ENCODE measurements at regions of chr1 and their contacts with region 1.

Region 1: GRCh38 chr1:173420330-173420806 is 56.8 kb upstream of the PRDX6 start:
- DNase-seq: no peak
- ATAC-seq: peak; percentile 21
- H3K4me3 Mint-ChIP-seq: peak overlapping the region; percentile 60
- H3K27ac Mint-ChIP-seq: peak overlapping the region; percentile 95
- H3K4me1 Mint-ChIP-seq: peaks cover 63% of the 10 kb centered on the region
- H3K27me3 Mint-ChIP-seq: no peaks in the 10 kb centered on the region
- CTCF ChIP-seq: no peak

Region 2: DNA sequence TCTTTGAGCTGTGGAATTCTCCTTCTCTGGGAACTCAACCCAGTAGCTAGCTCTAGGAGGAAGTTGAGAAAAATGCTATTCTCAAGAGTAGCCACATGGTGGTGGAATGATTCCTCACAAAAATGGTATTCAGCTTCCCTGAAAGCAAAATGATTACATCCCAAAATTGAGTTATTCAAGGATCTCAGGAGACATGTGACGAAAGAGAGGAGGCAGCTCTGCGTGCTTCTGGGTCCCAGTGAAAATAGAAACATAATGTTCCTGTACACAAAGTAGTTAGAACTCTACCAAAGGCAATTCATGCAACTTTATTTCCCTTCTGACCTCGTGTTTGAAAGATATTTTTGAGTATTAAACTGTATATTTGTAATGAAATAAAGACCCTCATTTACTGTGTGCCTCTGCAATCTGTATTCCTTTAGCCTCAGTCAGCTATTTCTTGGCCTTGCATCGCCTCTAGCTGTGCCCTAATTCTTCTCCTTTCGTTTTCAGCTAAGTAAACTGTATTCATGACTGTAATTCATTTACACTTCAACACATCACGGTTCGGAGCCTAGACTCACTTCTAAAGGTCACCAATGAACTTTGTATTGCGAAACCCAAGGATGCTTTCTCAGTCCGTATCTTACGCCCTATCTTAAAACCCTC is 594.1 kb before region 1 on chr1:
- CTCF ChIA-PET with region 1: interaction called, 36 read pairs
- POLR2A ChIA-PET with region 1: interaction called, 3 read pairs
- intact Hi-C with region 1: no loop called
- DNase-seq: no peak
- ATAC-seq: peak; percentile 62
- H3K4me3 Mint-ChIP-seq: no peak overlapping the region
- H3K27ac Mint-ChIP-seq: no peak overlapping the region
- H3K4me1 Mint-ChIP-seq: peaks cover 2% of the 10 kb centered on the region
- H3K27me3 Mint-ChIP-seq: no peaks in the 10 kb centered on the region
- CTCF ChIP-seq: no peak

Region 3: DNA sequence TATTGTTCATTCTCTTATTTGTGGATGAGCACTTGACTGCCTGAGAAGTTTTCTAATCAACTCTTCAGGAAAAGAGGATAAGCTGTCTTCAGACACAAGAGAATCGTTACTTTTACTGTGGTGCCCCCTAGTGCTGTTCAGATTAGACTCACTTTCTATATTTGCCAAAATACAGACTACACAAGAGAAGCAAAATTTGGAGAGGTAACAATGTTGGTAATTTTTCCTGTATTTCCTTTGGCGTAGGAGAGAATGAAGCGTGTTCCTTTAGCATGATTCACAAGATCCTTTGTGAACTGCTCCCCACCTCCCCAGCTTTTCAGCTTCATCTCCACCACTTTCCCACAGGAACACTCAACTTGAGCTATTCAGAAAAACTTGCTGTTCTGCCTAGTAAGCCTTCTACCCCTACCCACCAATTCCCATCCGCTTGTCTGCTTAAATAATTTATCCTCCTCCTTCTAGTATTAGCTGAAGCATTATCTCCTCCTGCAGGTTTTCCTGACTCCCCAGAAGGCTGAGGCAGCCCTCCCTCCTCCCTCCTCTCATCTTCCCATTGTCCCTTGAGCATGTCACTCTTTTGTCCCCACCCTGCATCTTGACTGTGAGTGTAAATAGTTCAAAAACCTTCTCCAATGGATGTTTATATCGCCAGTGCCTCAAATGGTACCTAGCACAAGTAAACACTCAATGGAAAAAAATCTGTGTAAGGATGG is 217.8 kb before region 1 on chr1:
- CTCF ChIA-PET with region 1: interaction called, 12 read pairs
- POLR2A ChIA-PET with region 1: interaction called, 24 read pairs
- intact Hi-C with region 1: loop called (anchors 2 kb)
- DNase-seq: no peak
- ATAC-seq: no peak
- H3K4me3 Mint-ChIP-seq: no peak overlapping the region
- H3K27ac Mint-ChIP-seq: no peak overlapping the region
- H3K4me1 Mint-ChIP-seq: peaks cover 50% of the 10 kb centered on the region
- H3K27me3 Mint-ChIP-seq: no peaks in the 10 kb centered on the region
- CTCF ChIP-seq: no peak

Region 4: GRCh38 chr1:173355281-173356031 is 64.9 kb before region 1 on chr1:
- CTCF ChIA-PET with region 1: no interaction called
- POLR2A ChIA-PET with region 1: interaction called, 10 read pairs
- intact Hi-C with region 1: no loop called
- DNase-seq: no peak
- ATAC-seq: peak; percentile 80
- H3K4me3 Mint-ChIP-seq: peak overlapping the region; percentile 76
- H3K27ac Mint-ChIP-seq: peak overlapping the region; percentile 79
- H3K4me1 Mint-ChIP-seq: peaks cover 30% of the 10 kb centered on the region
- H3K27me3 Mint-ChIP-seq: no peaks in the 10 kb centered on the region
- CTCF ChIP-seq: no peak

Region 5: DNA sequence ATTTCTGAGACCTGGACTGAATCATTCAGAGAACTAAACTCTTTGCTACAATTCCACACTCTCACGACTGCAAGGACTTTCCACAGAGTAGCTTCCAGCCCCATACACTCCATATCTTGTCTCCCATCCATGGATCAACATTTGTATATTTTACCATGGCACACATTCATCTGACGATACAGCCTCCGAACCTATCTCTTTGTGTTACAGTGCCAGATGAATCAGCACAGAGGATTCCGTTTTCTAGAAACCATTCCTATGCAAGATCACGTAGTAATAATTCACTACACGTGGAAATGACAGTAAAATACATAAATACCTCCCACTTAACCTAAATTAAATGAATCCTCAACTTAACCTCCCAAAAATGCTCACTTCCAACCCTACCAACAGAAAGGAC is 53.2 kb before region 1 on chr1:
- CTCF ChIA-PET with region 1: no interaction called
- POLR2A ChIA-PET with region 1: no interaction called
- intact Hi-C with region 1: no loop called
- DNase-seq: no peak
- ATAC-seq: no peak
- H3K4me3 Mint-ChIP-seq: no peak overlapping the region
- H3K27ac Mint-ChIP-seq: no peak overlapping the region
- H3K4me1 Mint-ChIP-seq: peaks cover 6% of the 10 kb centered on the region
- H3K27me3 Mint-ChIP-seq: no peaks in the 10 kb centered on the region
- CTCF ChIP-seq: no peak

Region 6: GRCh38 chr1:173824331-173825081 is 404.1 kb after region 1 on chr1 and contains the starts of genes CENPL and DARS2:
- CTCF ChIA-PET with region 1: interaction called, 8 read pairs
- POLR2A ChIA-PET with region 1: interaction called, 14 read pairs
- intact Hi-C with region 1: loop called (anchors 1 kb)
- DNase-seq: peak; percentile 80
- ATAC-seq: peak; percentile 89
- H3K4me3 Mint-ChIP-seq: peak within 1 kb of the TSS; percentile 95
- H3K27ac Mint-ChIP-seq: peak within 1 kb of the TSS; percentile 97
- H3K4me1 Mint-ChIP-seq: peaks cover 28% of the 10 kb centered on the region
- H3K27me3 Mint-ChIP-seq: no peaks in the 10 kb centered on the region
- CTCF ChIP-seq: no peak
- total RNA-seq, gene CENPL: 12.7 and 14.0 TPM in 2 replicates
- total RNA-seq, gene DARS2: 24.0 and 26.0 TPM in 2 replicates

Region 7: DNA sequence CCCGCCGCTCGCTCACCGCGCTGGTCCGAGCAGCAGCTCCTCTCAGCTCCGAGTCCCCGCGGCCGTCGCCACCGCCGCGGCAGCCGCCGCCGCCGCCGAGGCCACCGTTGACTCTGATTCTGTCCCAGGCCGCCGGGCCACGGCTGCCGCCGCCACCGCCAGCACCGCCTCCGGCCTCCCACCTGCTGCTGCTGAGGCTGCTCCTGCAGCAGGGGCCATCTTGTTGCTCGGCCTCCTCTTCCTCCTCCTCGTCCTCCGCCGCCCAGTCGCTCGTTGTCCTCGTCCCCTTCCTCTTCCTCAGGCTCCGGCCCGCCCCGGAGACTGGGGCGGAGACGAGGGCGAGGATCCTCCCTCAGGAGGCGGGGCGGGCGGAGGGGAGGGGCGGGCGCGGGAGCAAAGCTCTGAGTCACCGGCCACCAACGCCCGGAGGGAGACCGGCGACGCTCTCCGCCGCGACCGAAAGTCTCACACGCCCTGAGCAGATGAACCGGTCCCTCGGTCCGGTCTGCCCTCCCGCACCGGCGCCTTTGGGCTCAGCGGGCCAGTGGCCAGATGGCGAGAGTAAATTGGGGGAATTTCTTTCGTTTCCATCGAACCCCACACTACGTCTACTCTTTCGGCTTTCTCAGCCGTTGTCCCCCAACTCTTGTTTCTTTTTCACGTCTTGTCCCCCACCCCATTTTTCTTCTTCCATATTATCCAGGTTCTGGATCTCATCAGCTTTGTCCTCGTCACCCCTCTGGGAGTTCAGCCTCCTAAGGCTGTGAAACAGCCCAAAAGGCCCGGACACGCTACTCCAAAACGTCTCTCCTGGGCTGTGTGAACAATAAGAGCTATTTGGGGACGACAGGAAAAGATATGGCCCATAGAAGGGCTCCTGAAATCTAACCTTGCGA is 602.0 kb after region 1 on chr1 and contains the start of gene RC3H1:
- CTCF ChIA-PET with region 1: no interaction called
- POLR2A ChIA-PET with region 1: interaction called, 11 read pairs
- intact Hi-C with region 1: no loop called
- DNase-seq: peak; percentile 88
- ATAC-seq: peak; percentile 93
- H3K4me3 Mint-ChIP-seq: peak within 1 kb of the TSS; percentile 97
- H3K27ac Mint-ChIP-seq: peak within 1 kb of the TSS; percentile 96
- H3K4me1 Mint-ChIP-seq: peaks cover 42% of the 10 kb centered on the region
- H3K27me3 Mint-ChIP-seq: no peaks in the 10 kb centered on the region
- CTCF ChIP-seq: no peak
- total RNA-seq, gene RC3H1: 45.6 and 55.6 TPM in 2 replicates